ENCODE measurements at regions of chr2 and their contacts with region 1.

Region 1: DNA sequence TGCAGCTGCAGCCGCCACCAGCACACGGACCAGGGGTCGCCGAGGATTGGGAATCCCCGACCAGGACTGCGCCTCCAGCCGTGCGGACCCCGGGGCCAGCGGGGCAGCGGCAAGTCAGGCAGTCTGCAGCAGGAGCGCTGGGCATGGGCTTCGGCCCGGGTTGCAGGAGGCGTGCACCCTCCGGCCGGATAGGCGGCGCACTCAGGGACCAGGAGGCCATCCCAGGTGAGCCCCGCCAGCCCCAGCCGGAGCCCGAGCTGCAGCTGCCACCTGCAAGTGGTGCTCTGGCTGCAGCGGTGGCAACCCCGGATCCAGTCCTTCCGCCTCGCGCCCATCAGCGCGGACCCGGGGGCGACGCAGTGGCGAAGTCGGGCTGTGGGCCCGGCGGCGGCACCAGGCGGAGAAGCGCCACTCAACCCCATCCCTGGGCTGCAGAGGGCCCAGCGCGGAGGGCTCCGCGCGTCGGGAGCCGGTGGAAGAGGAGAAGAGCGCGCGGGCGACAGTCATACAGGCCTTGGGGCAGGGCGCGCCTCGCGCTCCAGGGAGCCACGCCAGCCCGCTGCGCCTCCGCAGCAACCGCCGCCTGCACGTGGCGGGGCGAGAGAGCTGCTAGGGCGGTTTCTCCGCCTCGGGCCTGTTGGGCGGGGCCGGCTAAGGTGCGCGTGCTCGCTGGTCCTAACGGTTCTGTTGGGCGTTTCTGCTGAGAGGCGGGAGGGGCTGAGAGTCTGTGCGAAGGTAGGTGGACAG is 73.9 kb downstream of the RPIA start:
- DNase-seq: peak in 8 of 9 donors; percentile 53 to 67 (median 59)
- ATAC-seq: peak; percentile 61
- H3K4me3 ChIP-seq: peak overlapping the region; percentile 51
- H3K4me3 Mint-ChIP-seq: peak overlapping the region; percentile 78 to 94 (median 88)
- H3K27ac ChIP-seq: peak overlapping the region; percentile 61
- H3K27ac Mint-ChIP-seq: peak overlapping the region; percentile 34 to 94 (median 83)
- H3K4me1 ChIP-seq: peaks cover 0 to 8% of the 10 kb centered on the region in 2 donors
- H3K4me1 Mint-ChIP-seq: peaks cover 4 to 40% (median 13%) of the 10 kb centered on the region in 7 donors
- H3K27me3 ChIP-seq: no peaks in the 10 kb centered on the region
- H3K27me3 Mint-ChIP-seq: peaks cover 5 to 38% (median 15%) of the 10 kb centered on the region in 5 donors

Region 2: GRCh38 chr2:88307817-88308216 is 457.5 kb before region 1 on chr2:
- CTCF ChIA-PET with region 1: no interaction called
- POLR2A ChIA-PET with region 1: no interaction called
- intact Hi-C with region 1: no loop called
- DNase-seq: no peak
- ATAC-seq: no peak
- H3K4me3 ChIP-seq: no peak overlapping the region
- H3K4me3 Mint-ChIP-seq: no peak overlapping the region
- H3K27ac ChIP-seq: no peak overlapping the region
- H3K27ac Mint-ChIP-seq: no peak overlapping the region
- H3K4me1 ChIP-seq: no peaks in the 10 kb centered on the region
- H3K4me1 Mint-ChIP-seq: no peaks in the 10 kb centered on the region
- H3K27me3 ChIP-seq: no peaks in the 10 kb centered on the region
- H3K27me3 Mint-ChIP-seq: peaks cover 4 to 35% (median 25%) of the 10 kb centered on the region in 5 donors

Region 3: GRCh38 chr2:88590998-88591613 is 174.2 kb before region 1 on chr2:
- CTCF ChIA-PET with region 1: no interaction called
- POLR2A ChIA-PET with region 1: no interaction called
- intact Hi-C with region 1: loop called in 1 of 2 experiments (anchors 1 kb)
- DNase-seq: peak in 8 of 9 donors; percentile 19 to 56 (median 38)
- ATAC-seq: peak; percentile 87
- H3K4me3 ChIP-seq: no peak overlapping the region
- H3K4me3 Mint-ChIP-seq: no peak overlapping the region
- H3K27ac ChIP-seq: no peak overlapping the region
- H3K27ac Mint-ChIP-seq: peak overlapping the region in 3 of 9 donors; percentile 20 to 68 (median 47)
- H3K4me1 ChIP-seq: no peaks in the 10 kb centered on the region
- H3K4me1 Mint-ChIP-seq: peaks cover 0 to 3% (median 0%) of the 10 kb centered on the region in 7 donors
- H3K27me3 ChIP-seq: no peaks in the 10 kb centered on the region
- H3K27me3 Mint-ChIP-seq: no peaks in the 10 kb centered on the region

Region 4: GRCh38 chr2:88753833-88754584 is 11.3 kb before region 1 on chr2:
- CTCF ChIA-PET with region 1: interaction called, 6 read pairs
- POLR2A ChIA-PET with region 1: interaction called, 10 read pairs
- intact Hi-C with region 1: loop called in 1 of 2 experiments (anchors 1 kb)
- DNase-seq: peak in 7 of 9 donors; percentile 61 to 85 (median 78)
- ATAC-seq: peak; percentile 79
- H3K4me3 ChIP-seq: peak overlapping the region; percentile 5
- H3K4me3 Mint-ChIP-seq: peak overlapping the region; percentile 33 to 87 (median 62)
- H3K27ac ChIP-seq: peak overlapping the region; percentile 84
- H3K27ac Mint-ChIP-seq: peak overlapping the region; percentile 90 to 100 (median 97)
- H3K4me1 ChIP-seq: peaks cover 0 to 60% of the 10 kb centered on the region in 2 donors
- H3K4me1 Mint-ChIP-seq: peaks cover 28 to 83% (median 70%) of the 10 kb centered on the region in 7 donors
- H3K27me3 ChIP-seq: no peaks in the 10 kb centered on the region
- H3K27me3 Mint-ChIP-seq: no peaks in the 10 kb centered on the region

Region 5: GRCh38 chr2:88818381-88818780 is 53.1 kb after region 1 on chr2:
- CTCF ChIA-PET with region 1: no interaction called
- POLR2A ChIA-PET with region 1: no interaction called
- intact Hi-C with region 1: no loop called
- DNase-seq: no peak
- ATAC-seq: no peak
- H3K4me3 ChIP-seq: no peak overlapping the region
- H3K4me3 Mint-ChIP-seq: no peak overlapping the region
- H3K27ac ChIP-seq: no peak overlapping the region
- H3K27ac Mint-ChIP-seq: no peak overlapping the region
- H3K4me1 ChIP-seq: no peaks in the 10 kb centered on the region
- H3K4me1 Mint-ChIP-seq: no peaks in the 10 kb centered on the region
- H3K27me3 ChIP-seq: no peaks in the 10 kb centered on the region
- H3K27me3 Mint-ChIP-seq: peaks cover 0 to 7% (median 5%) of the 10 kb centered on the region in 5 donors